CD14-positive monocyte (primary cell): ENCODE measurements at regions of chr20 and their contacts with region 1.

Region 1: DNA sequence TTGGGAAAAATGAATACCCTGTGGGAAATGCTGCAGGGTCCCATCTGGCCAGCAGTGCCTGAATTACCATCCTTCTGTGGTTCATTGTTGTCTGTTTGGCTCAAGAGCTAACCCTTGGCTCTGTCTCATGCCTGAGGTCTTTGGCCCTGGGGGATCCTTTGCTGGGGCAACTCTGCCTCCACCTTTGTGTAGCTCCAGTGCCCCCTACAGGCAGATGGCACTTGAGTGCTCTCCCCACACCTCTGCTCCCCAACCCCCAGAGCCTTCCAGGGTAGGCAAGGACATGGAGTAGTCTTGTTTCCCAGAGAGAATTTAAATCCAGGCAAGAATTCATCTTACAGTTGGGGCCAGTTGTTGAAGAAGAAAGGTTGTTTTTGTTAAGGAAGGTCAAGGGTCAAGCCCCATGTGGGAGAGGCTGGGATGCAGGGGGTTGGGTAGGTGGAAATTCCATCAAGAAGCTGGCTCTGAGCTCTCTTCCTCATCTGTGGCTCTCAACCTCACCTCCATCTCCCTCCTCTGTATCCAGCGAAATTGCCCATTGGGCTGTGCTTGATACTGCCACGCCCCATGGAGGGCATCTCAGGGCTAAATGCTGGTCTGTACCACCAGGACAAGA is 44.2 kb downstream of the ZNF831 start:
- DNase-seq: peak; percentile 47 to 65 (median 62)
- H3K4me3 ChIP-seq: no peak overlapping the region
- H3K4me3 Mint-ChIP-seq: no peak overlapping the region
- H3K27ac ChIP-seq: no peak overlapping the region
- H3K27ac Mint-ChIP-seq: no peak overlapping the region
- H3K4me1 ChIP-seq: no peaks in the 10 kb centered on the region
- H3K4me1 Mint-ChIP-seq: peaks cover 1% of the 10 kb centered on the region
- H3K27me3 ChIP-seq: no peaks in the 10 kb centered on the region
- H3K27me3 Mint-ChIP-seq: peaks cover 0 to 8% (median 3%) of the 10 kb centered on the region in 3 donors
- CTCF ChIP-seq: peak; percentile 84

Region 2: DNA sequence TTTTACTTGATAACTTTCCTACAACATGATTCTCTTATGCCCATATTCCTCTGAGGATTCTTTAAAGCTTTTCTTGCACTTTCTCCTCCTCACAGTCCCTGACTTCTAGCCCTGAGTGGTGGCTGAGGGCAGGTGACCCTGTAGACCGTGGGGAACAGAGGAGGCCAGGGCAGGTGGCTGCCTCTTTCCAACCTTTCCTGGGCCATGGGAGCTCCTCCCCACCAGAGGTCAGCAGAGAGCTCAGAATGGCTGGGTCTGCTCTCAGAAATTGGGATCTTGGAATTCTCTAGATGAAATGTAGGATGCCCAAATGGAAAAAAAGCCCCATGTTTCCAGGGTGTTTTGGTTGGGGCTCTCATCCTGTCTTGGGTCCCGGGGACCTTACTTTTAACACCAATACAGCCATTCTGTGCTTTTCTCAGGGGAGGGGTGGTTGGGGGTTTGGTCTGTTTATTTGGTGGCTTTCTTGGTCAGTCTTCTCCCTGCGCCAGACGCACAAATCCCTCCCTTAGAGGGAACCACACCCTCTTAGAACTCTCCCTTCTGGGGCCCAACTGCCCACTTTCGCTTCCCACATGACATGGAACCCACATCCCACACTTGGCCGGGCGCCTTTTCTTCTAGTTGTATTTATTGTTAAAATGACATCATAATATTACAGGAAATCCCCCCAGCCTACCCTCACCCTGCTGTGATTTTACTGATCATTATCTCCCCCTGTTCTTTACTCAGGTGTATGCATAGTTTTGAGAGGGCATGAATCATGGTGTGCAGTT is 337.4 kb before region 1 on chr20:
- intact Hi-C with region 1: loop called in 1 of 2 experiments (anchors 5 kb)
- DNase-seq: peak in 2 of 3 donors; percentile 36 to 44
- H3K4me3 ChIP-seq: no peak overlapping the region
- H3K4me3 Mint-ChIP-seq: peak overlapping the region in 1 of 2 donors; percentile 22
- H3K27ac ChIP-seq: no peak overlapping the region
- H3K27ac Mint-ChIP-seq: peak overlapping the region in 1 of 7 donors; percentile 23
- H3K4me1 ChIP-seq: peaks cover 6 to 10% of the 10 kb centered on the region in 2 donors
- H3K4me1 Mint-ChIP-seq: peaks cover 14% of the 10 kb centered on the region
- H3K27me3 ChIP-seq: peaks cover 10% of the 10 kb centered on the region in 2 donors
- H3K27me3 Mint-ChIP-seq: peaks cover 8 to 37% (median 24%) of the 10 kb centered on the region in 3 donors
- CTCF ChIP-seq: peak; percentile 77

Region 3: DNA sequence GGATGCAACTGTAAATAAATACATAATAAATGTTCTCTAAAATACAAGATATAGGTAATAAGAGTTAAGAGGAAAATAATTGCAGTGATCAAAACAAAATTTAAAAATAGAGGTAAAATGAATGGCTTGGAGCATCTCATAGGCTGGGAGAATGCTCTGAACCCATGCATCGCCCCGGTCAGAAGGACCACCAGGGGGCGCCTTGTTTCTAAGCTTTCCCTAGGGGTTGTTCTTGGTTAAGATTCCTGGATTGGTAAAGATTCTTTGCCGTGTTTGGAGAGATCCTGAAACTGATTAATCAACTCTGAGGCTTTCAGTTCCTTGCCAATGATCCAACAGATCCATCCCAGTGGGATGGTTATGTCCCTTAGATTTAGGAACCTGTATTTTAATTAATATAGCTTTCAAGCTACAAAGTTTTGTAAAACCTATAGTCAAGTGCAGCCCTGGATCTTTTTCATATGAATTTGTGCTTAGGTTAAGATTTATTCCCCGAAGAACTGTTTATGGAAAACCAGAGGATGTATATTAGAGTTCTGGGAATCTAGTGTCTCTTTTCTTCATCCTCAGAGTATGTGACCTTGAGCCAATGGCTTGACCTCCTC is 119.9 kb before region 1 on chr20:
- intact Hi-C with region 1: loop called (anchors 2 to 5 kb)
- DNase-seq: peak; percentile 56 to 77 (median 70)
- H3K4me3 ChIP-seq: no peak overlapping the region
- H3K4me3 Mint-ChIP-seq: no peak overlapping the region
- H3K27ac ChIP-seq: no peak overlapping the region
- H3K27ac Mint-ChIP-seq: peak overlapping the region in 1 of 7 donors; percentile 58
- H3K4me1 ChIP-seq: no peaks in the 10 kb centered on the region
- H3K4me1 Mint-ChIP-seq: peaks cover 4% of the 10 kb centered on the region
- H3K27me3 ChIP-seq: peaks cover 16 to 20% of the 10 kb centered on the region in 2 donors
- H3K27me3 Mint-ChIP-seq: peaks cover 7 to 12% (median 7%) of the 10 kb centered on the region in 3 donors
- CTCF ChIP-seq: peak; percentile 96

Region 4: GRCh38 chr20:59125836-59126235 is 82.0 kb before region 1 on chr20:
- intact Hi-C with region 1: no loop called
- DNase-seq: no peak
- H3K4me3 ChIP-seq: no peak overlapping the region
- H3K4me3 Mint-ChIP-seq: no peak overlapping the region
- H3K27ac ChIP-seq: no peak overlapping the region
- H3K27ac Mint-ChIP-seq: no peak overlapping the region
- H3K4me1 ChIP-seq: peaks cover 2 to 15% of the 10 kb centered on the region in 2 donors
- H3K4me1 Mint-ChIP-seq: peaks cover 18% of the 10 kb centered on the region
- H3K27me3 ChIP-seq: peaks cover 0 to 2% of the 10 kb centered on the region in 2 donors
- H3K27me3 Mint-ChIP-seq: peaks cover 10 to 18% (median 11%) of the 10 kb centered on the region in 3 donors
- CTCF ChIP-seq: no peak

Region 5: DNA sequence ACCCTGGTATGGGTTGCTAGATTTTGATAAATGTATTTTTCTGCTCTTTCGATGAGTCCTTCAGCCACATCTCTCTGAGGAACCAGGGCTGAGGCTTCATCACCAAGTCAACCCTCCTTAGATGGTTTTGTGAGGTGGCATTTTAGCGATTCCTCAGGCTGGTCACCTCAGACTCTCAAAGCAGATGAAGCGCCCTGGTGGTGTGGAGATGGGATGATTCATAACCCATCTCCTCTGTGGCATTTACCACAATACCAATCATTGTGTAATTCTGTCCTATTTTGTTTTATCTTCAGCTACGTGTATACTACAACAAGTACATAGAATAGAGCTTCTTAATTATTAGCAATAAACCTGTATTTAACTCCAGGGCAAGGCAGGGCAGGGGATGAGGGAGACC is 34.9 kb after region 1 on chr20:
- intact Hi-C with region 1: no loop called
- DNase-seq: no peak
- H3K4me3 ChIP-seq: no peak overlapping the region
- H3K4me3 Mint-ChIP-seq: no peak overlapping the region
- H3K27ac ChIP-seq: no peak overlapping the region
- H3K27ac Mint-ChIP-seq: no peak overlapping the region
- H3K4me1 ChIP-seq: no peaks in the 10 kb centered on the region
- H3K4me1 Mint-ChIP-seq: peaks cover 6% of the 10 kb centered on the region
- H3K27me3 ChIP-seq: peaks cover 27 to 33% of the 10 kb centered on the region in 2 donors
- H3K27me3 Mint-ChIP-seq: peaks cover 8 to 37% (median 10%) of the 10 kb centered on the region in 3 donors
- CTCF ChIP-seq: no peak

Region 6: DNA sequence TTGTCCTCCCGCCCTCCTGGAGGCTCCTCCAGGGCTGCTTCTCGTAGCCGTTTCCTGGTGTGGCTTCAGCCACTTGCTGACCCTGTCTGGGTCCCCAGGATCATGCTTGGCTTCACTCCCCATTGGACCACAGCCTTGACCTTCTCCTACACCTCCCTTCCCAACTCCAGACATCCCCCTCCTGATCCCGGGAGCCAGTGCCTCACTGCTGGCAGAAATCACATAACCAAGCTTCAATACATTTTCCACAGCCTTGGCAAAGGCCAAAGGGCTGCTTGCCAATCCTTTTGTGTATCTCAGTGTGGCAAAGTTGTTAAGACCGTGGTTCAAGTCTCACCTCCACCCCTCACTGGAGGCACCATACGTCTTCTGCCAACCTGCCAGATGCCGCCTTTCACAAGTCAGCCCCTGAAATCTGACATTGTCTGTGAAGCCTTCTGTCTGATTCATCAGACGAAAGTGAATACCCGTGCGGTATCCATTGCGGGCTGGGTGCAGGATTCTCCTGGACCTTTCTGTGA is 456.6 kb after region 1 on chr20:
- intact Hi-C with region 1: no loop called
- DNase-seq: no peak
- H3K4me3 ChIP-seq: no peak overlapping the region
- H3K4me3 Mint-ChIP-seq: no peak overlapping the region
- H3K27ac ChIP-seq: no peak overlapping the region
- H3K27ac Mint-ChIP-seq: no peak overlapping the region
- H3K4me1 ChIP-seq: no peaks in the 10 kb centered on the region
- H3K4me1 Mint-ChIP-seq: no peaks in the 10 kb centered on the region
- H3K27me3 ChIP-seq: no peaks in the 10 kb centered on the region
- H3K27me3 Mint-ChIP-seq: peaks cover 2 to 25% (median 17%) of the 10 kb centered on the region in 3 donors
- CTCF ChIP-seq: no peak